ENCODE measurements at regions of chr6 and their contacts with region 1.

Region 1: DNA sequence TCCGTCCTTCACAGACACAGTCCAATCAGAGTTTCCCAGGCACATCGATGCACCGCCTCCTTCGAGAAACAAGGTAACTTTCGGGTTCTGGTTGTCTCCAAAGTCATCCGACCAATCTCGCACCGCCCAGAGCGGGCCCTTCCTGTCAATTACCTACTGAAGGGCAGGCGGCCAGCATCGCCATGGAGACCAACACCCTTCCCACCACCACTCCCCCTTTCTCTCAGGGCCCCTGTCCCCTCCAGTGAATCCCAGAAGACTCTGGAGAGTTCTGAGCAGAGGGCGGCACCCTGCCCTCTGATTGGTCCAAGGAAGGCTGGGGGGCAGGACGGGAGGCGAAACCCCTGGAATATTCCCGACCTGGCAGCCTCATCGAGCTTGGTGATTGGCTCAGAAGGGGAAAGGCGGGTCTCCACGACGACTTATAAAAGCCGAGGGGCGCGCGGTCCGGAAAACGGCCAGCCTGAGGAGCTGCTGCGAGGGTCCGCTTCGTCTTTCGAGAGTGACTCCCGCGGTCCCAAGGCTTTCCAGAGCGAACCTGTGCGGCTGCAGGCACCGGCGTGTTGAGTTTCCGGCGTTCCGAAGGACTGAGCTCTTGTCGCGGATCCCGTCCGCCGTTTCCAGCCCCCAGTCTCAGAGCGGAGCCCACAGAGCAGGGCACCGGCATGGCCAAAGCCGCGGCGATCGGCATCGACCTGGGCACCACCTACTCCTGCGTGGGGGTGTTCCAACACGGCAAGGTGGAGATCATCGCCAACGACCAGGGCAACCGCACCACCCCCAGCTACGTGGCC is at the start of gene HSPA1B:
- DNase-seq: peak; percentile 99 to 100
- H3K4me3 ChIP-seq: peak within 1 kb of the TSS; percentile 56 to 90
- H3K27ac ChIP-seq: peak within 1 kb of the TSS; percentile 91 to 93
- H3K4me1 ChIP-seq: peaks cover 20 to 35% of the 10 kb centered on the region in 2 donors
- H3K27me3 ChIP-seq: no peaks in the 10 kb centered on the region
- CTCF ChIP-seq: no peak
- total RNA-seq, gene HSPA1B: 613 TPM

Region 2: DNA sequence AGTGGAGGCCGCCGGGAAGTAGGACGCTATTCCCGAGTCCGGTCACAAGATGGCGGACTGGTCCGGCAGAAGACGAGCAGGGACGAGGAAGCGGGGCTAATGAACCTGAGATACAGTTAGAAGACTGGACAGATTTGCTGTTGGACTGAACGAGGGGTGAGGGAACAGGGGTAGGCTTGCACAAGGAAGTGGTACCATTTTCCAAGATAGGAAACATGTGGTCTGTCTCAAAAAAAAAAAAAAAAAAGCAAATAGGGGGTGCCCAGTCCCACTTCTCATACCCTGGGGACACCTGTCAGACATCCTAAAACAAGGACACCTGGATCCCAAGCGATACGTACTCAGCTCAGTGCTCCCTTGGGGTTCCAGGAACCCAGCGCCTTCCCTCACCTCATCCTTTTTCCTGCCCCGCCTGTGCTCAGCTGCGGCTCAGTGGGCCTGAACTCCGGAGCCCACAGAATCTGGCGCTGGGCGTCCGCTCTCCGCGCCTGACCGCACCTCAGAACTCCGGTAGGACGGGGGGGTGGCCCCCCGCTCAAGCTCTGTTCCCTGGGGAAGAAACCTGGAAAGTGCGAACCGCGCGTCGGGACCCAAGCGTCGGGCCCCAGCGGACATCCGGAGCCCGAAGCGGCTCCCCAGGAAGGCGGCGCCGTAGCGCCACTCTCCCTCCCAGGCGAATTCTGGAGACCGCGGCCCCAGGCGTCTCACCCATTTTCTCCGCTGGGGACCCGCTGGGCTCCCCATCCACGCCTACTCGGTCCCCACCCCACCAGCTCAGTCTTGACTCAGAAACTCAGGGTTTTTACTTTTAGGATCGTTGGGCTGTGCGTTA is 146.4 kb before region 1 on chr6 and contains the start of gene LY6G5C:
- intact Hi-C with region 1: loop called (anchors 1 kb)
- DNase-seq: peak; percentile 47 to 91
- H3K4me3 ChIP-seq: peak within 1 kb of the TSS; percentile 62 to 86
- H3K27ac ChIP-seq: peak within 1 kb of the TSS; percentile 62 to 64
- H3K4me1 ChIP-seq: peaks cover 2 to 5% of the 10 kb centered on the region in 2 donors
- H3K27me3 ChIP-seq: no peaks in the 10 kb centered on the region
- CTCF ChIP-seq: peak; percentile 81 to 83 (median 82)
- total RNA-seq, gene LY6G5C: 0.96 TPM

Region 3: GRCh38 chr6:31739639-31740396 is 87.7 kb before region 1 on chr6 and contains the start of gene MSH5:
- intact Hi-C with region 1: loop called (anchors 2 kb)
- DNase-seq: peak; percentile 96 to 99
- H3K4me3 ChIP-seq: peak within 1 kb of the TSS; percentile 61 to 73
- H3K27ac ChIP-seq: peak within 1 kb of the TSS; percentile 56 to 94
- H3K4me1 ChIP-seq: peaks cover 9 to 23% of the 10 kb centered on the region in 2 donors
- H3K27me3 ChIP-seq: no peaks in the 10 kb centered on the region
- CTCF ChIP-seq: no peak
- total RNA-seq, gene MSH5: 17.7 TPM

Region 4: DNA sequence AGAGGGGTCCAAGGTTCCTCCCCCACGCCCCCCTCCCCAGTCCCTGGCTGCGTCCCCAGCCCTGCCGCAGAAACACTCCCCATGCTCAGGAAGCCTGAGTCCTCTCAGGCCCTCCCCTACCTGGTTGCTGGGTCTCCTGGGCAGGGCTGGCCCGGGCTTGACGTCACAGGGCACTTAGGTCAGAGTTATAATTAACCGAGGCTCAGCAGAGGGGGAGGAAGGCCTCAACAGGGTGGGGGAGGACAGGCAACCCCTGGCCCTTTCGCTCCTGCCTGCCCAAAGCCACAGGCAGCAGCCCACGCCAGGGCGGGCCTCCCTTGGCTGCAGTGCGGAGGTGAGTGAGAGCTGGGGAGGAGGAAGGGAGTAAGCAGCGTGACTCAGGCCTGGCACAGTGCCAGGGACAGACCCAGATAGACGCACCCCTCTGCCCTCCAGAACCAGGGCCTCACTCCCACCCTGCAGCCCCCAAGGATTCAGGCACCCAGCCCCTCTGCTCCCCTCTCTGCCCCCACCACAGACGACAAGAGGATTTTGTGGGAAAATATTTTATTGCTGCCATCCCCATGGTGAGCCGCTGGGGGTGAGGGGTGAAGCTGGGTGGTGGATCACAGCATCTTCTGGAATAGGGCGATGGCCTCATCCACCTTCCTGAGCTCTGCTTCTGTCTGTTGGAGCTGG is 50.4 kb before region 1 on chr6 and contains the start of gene VWA7:
- intact Hi-C with region 1: loop called (anchors 2 kb)
- DNase-seq: peak in 1 of 2 donors; percentile 73
- H3K4me3 ChIP-seq: no peak within 1 kb of the TSS
- H3K27ac ChIP-seq: no peak within 1 kb of the TSS
- H3K4me1 ChIP-seq: peaks cover 0 to 6% of the 10 kb centered on the region in 2 donors
- H3K27me3 ChIP-seq: no peaks in the 10 kb centered on the region
- CTCF ChIP-seq: no peak
- total RNA-seq, gene VWA7: not detected

Region 5: DNA sequence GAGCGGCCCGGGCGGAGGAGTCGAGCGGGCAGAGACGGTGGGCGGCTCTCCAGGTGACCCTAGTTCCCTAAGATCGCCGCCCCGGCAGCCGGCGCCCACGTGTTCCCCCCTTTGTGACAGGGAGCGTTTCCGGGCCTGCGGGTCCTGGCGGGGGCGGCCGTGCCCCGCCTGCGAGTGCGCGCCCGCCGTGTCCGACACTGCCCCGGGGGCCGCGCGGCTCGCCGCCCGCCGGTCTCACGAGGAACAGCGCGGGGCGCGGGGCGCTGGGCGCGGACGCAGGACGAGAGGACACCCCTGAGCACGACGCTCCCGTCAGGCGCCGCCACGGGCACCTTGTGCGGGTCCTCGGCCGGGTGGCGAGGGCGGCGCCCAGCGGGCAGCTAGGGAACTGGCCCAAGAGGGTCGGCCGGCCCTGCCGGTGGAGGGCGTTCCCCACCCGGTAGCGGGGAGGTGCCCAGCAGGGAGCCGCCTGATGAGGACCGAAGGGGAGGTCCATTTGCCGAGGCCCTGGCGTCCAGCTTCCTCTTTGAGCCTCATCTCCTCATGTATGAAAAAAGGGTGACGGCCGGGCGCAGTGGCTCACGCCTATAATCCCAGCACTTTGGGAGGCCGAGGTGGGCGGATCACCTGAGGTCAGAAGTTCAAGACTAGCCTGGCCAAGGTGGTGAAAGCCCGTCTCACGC is 31.7 kb before region 1 on chr6 and contains the start of gene VARS1:
- intact Hi-C with region 1: loop called (anchors 2 kb)
- DNase-seq: peak; percentile 72 to 94
- H3K4me3 ChIP-seq: peak within 1 kb of the TSS; percentile 81 to 83
- H3K27ac ChIP-seq: peak within 1 kb of the TSS; percentile 88 to 92
- H3K4me1 ChIP-seq: peaks cover 4 to 18% of the 10 kb centered on the region in 2 donors
- H3K27me3 ChIP-seq: no peaks in the 10 kb centered on the region
- CTCF ChIP-seq: peak; percentile 71 to 97 (median 89)
- total RNA-seq, gene VARS1: 48.3 TPM

Region 6: GRCh38 chr6:31940256-31940664 is 112.8 kb after region 1 on chr6:
- intact Hi-C with region 1: no loop called
- DNase-seq: no peak
- H3K4me3 ChIP-seq: no peak overlapping the region
- H3K27ac ChIP-seq: no peak overlapping the region
- H3K4me1 ChIP-seq: peaks cover 0 to 6% of the 10 kb centered on the region in 2 donors
- H3K27me3 ChIP-seq: no peaks in the 10 kb centered on the region
- CTCF ChIP-seq: no peak